ENCODE measurements at regions of chr18 and their contacts with region 1.

Region 1: GRCh38 chr18:58552057-58552461 is 76.8 kb downstream of the ALPK2 start:
- DNase-seq: peak; percentile 50 to 53
- H3K4me3 ChIP-seq: no peak overlapping the region
- H3K4me3 Mint-ChIP-seq: peak overlapping the region; percentile 53
- H3K27ac Mint-ChIP-seq: peak overlapping the region; percentile 89
- H3K4me1 ChIP-seq: peaks cover 47% of the 10 kb centered on the region
- H3K4me1 Mint-ChIP-seq: peaks cover 37% of the 10 kb centered on the region
- H3K27me3 ChIP-seq: no peaks in the 10 kb centered on the region
- H3K27me3 Mint-ChIP-seq: no peaks in the 10 kb centered on the region
- CTCF ChIP-seq: no peak

Region 2: GRCh38 chr18:58578835-58579560 is 26.9 kb after region 1 on chr18:
- CTCF ChIA-PET with region 1: no interaction called
- POLR2A ChIA-PET with region 1: interaction called, 7 read pairs
- intact Hi-C with region 1: loop called (anchors 2 kb)
- DNase-seq: no peak
- H3K4me3 ChIP-seq: no peak overlapping the region
- H3K4me3 Mint-ChIP-seq: peak overlapping the region; percentile 19
- H3K27ac Mint-ChIP-seq: peak overlapping the region; percentile 67
- H3K4me1 ChIP-seq: peaks cover 15% of the 10 kb centered on the region
- H3K4me1 Mint-ChIP-seq: peaks cover 14% of the 10 kb centered on the region
- H3K27me3 ChIP-seq: no peaks in the 10 kb centered on the region
- H3K27me3 Mint-ChIP-seq: no peaks in the 10 kb centered on the region
- CTCF ChIP-seq: no peak

Region 3: DNA sequence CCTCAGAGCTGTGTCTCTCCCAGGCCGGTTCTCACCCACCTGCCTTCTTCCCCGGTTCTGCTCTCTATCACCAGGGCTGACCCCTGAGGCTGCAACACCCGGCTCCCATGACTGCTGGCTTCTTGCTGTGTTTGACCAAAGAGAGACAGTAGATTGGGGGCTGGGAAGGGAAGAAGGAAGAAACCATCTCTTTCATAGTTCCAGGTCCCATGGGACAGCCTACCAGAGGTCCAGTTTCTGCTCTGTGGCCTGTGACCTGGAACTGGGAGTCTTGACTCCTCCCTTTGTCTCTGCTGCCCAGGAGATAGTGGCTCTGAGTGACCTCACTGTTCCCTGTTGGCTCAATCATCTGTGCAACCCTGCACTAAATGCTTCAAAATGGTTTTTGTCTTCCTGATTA is 38.8 kb after region 1 on chr18:
- CTCF ChIA-PET with region 1: no interaction called
- POLR2A ChIA-PET with region 1: no interaction called
- intact Hi-C with region 1: loop called (anchors 1 kb)
- DNase-seq: peak in 1 of 2 experiments; percentile 1
- H3K4me3 ChIP-seq: no peak overlapping the region
- H3K4me3 Mint-ChIP-seq: no peak overlapping the region
- H3K27ac Mint-ChIP-seq: peak overlapping the region; percentile 76
- H3K4me1 ChIP-seq: peaks cover 19% of the 10 kb centered on the region
- H3K4me1 Mint-ChIP-seq: peaks cover 6% of the 10 kb centered on the region
- H3K27me3 ChIP-seq: no peaks in the 10 kb centered on the region
- H3K27me3 Mint-ChIP-seq: no peaks in the 10 kb centered on the region
- CTCF ChIP-seq: no peak

Region 4: GRCh38 chr18:58639751-58640427 is 87.8 kb after region 1 on chr18:
- CTCF ChIA-PET with region 1: no interaction called
- POLR2A ChIA-PET with region 1: no interaction called
- intact Hi-C with region 1: no loop called
- DNase-seq: no peak
- H3K4me3 ChIP-seq: no peak overlapping the region
- H3K4me3 Mint-ChIP-seq: no peak overlapping the region
- H3K27ac Mint-ChIP-seq: no peak overlapping the region
- H3K4me1 ChIP-seq: no peaks in the 10 kb centered on the region
- H3K4me1 Mint-ChIP-seq: no peaks in the 10 kb centered on the region
- H3K27me3 ChIP-seq: no peaks in the 10 kb centered on the region
- H3K27me3 Mint-ChIP-seq: no peaks in the 10 kb centered on the region
- CTCF ChIP-seq: no peak

Region 5: GRCh38 chr18:58671111-58671631 is 119.1 kb after region 1 on chr18 and contains the start of gene MALT1:
- CTCF ChIA-PET with region 1: no interaction called
- POLR2A ChIA-PET with region 1: interaction called, 3 read pairs
- intact Hi-C with region 1: loop called (anchors 5 kb)
- DNase-seq: peak; percentile 85 to 90
- H3K4me3 ChIP-seq: peak within 1 kb of the TSS; percentile 52
- H3K4me3 Mint-ChIP-seq: peak within 1 kb of the TSS; percentile 94
- H3K27ac Mint-ChIP-seq: peak within 1 kb of the TSS; percentile 84
- H3K4me1 ChIP-seq: no peaks in the 10 kb centered on the region
- H3K4me1 Mint-ChIP-seq: peaks cover 22% of the 10 kb centered on the region
- H3K27me3 ChIP-seq: no peaks in the 10 kb centered on the region
- H3K27me3 Mint-ChIP-seq: no peaks in the 10 kb centered on the region
- CTCF ChIP-seq: no peak
- total RNA-seq, gene MALT1: 19.3 and 22.6 TPM in 2 replicates